ENCODE measurements at regions of chr2 and their contacts with region 1.

Region 1: GRCh38 chr2:181742922-181743722 is 62.8 kb upstream of the NEUROD1 start:
- DNase-seq: no peak
- H3K4me3 Mint-ChIP-seq: no peak overlapping the region
- H3K27ac Mint-ChIP-seq: no peak overlapping the region
- H3K4me1 Mint-ChIP-seq: peaks cover 3% of the 10 kb centered on the region
- H3K27me3 Mint-ChIP-seq: peaks cover 24% of the 10 kb centered on the region

Region 2: GRCh38 chr2:181183878-181184542 is 559.1 kb before region 1 on chr2:
- intact Hi-C with region 1: no loop called
- DNase-seq: no peak
- H3K4me3 Mint-ChIP-seq: no peak overlapping the region
- H3K27ac Mint-ChIP-seq: no peak overlapping the region
- H3K4me1 Mint-ChIP-seq: peaks cover 33% of the 10 kb centered on the region
- H3K27me3 Mint-ChIP-seq: no peaks in the 10 kb centered on the region

Region 3: GRCh38 chr2:181677912-181678586 is 65.1 kb before region 1 on chr2:
- intact Hi-C with region 1: no loop called
- DNase-seq: peak; percentile 57
- H3K4me3 Mint-ChIP-seq: no peak overlapping the region
- H3K27ac Mint-ChIP-seq: no peak overlapping the region
- H3K4me1 Mint-ChIP-seq: peaks cover 27% of the 10 kb centered on the region
- H3K27me3 Mint-ChIP-seq: peaks cover 80% of the 10 kb centered on the region

Region 4: DNA sequence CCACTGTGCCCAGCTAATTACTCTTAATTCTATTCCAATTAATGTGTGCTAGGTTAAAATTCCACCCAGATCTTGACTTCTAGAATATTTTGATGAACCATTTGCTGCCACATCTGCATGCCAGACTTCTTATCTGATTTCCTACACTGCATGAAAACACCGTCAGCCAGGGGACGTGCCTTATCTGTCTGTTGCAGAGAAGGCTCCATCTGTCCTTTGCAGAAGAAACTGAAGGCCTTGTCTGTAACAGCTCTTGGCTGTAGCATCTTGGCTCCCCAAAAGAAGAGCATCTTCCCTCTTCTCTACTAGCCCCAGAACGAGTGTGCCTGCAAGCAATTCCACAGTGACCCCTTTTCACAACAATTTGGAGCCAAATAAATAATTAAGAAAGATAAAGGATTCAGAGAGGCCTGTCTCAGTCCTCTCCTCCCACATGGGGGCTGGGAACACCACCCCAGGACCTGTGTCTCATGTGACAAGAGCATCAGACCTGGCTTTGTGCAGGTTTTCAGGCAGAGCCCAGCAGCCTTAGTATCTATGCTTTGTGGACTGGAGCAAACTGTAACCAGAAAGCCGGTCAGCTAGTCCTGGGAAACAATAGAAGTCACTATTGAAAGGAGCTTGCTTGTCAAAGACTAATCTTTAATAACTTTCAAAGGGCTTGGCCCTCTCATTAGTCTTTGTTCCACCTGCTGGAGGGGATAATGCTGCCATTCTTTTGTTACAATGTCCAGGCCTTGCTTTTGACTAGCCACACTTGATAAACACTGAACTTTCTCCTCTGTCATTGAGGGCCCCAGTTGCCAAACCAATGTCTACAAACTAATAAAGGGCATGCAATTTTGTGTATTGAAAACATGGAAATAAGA is 21.2 kb after region 1 on chr2:
- intact Hi-C with region 1: no loop called
- DNase-seq: no peak
- H3K4me3 Mint-ChIP-seq: no peak overlapping the region
- H3K27ac Mint-ChIP-seq: no peak overlapping the region
- H3K4me1 Mint-ChIP-seq: no peaks in the 10 kb centered on the region
- H3K27me3 Mint-ChIP-seq: peaks cover 6% of the 10 kb centered on the region

Region 5: DNA sequence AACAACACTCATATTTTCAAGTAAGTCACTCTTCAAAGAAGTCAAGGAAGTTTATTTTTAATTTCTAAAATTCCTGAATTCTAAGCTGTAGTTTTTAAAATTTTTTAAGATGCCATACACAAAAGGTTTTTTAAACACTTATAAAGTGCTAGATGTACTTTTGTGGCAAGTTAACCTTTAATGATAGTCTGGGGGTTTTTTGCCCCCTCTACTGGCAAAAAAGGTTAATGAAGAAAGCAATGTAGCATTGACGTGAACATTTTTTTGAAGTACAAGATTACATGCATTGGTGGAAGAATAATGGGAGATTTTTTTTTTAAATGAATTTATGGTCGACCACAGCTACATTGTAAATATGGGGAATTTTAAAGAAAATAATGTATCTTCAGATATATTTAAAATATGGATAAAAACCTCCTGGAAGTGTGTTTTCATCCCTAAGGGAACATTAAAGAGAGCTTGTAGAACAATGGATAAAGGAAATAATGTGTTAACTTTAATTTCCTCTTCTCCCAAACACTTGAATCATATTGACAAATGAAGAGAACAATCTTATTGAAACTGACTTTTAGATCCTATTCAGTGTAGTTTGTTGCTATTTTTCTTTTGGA is 161.0 kb after region 1 on chr2:
- intact Hi-C with region 1: loop called (anchors 1 kb)
- DNase-seq: no peak
- H3K4me3 Mint-ChIP-seq: no peak overlapping the region
- H3K27ac Mint-ChIP-seq: no peak overlapping the region
- H3K4me1 Mint-ChIP-seq: peaks cover 25% of the 10 kb centered on the region
- H3K27me3 Mint-ChIP-seq: no peaks in the 10 kb centered on the region

Region 6: GRCh38 chr2:182077451-182078142 is 334.5 kb after region 1 on chr2:
- intact Hi-C with region 1: loop called (anchors 1 kb)
- DNase-seq: no peak
- H3K4me3 Mint-ChIP-seq: no peak overlapping the region
- H3K27ac Mint-ChIP-seq: no peak overlapping the region
- H3K4me1 Mint-ChIP-seq: no peaks in the 10 kb centered on the region
- H3K27me3 Mint-ChIP-seq: peaks cover 7% of the 10 kb centered on the region

Measured in activated T-helper 2 cell treated with anti-CD3 and anti-CD28 coated beads, Interferon-gamma antibody, Interleukin-2, Interleukin-4, amounts not matched to agents 10 μg/mL and 5 μg/mL and 100 μg/mL, durations not matched to agents 14 hours and 24 hours and 36 hours (primary cell).